ENCODE measurements at regions of chr2 and their contacts with region 1.

Region 1: DNA sequence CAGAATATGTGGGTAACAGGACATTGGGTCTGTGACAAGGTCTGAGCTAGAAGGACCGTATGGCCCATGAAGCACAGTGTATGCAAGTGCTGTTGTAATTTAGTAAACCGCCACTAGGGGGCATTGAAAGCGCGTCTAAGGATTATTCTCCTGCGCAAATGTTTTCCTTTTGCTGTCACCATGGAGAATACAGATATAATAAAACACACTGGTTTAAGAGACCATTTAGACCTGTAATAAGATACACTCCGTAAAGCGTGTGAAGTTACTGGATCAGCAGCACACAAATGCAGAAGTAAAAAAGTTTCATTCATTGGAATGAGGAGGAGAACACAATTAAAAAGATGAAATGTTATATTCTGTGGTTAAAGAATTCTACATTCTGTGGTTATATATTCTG is 272.4 kb downstream of the AGAP1 start:
- DNase-seq: peak; percentile 65 to 81
- ATAC-seq: peak; percentile 93 to 97
- H3K4me3 ChIP-seq: no peak overlapping the region
- H3K27ac ChIP-seq: no peak overlapping the region
- H3K4me1 ChIP-seq: peaks cover 9% of the 10 kb centered on the region; the same call in 1 of the 3 replicates
- CTCF ChIP-seq: peak; percentile 89
- EP300 ChIP-seq: no peak
- POLR2A ChIP-seq: no peak
- RAD21 ChIP-seq: peak; percentile 61 to 69

Region 2: DNA sequence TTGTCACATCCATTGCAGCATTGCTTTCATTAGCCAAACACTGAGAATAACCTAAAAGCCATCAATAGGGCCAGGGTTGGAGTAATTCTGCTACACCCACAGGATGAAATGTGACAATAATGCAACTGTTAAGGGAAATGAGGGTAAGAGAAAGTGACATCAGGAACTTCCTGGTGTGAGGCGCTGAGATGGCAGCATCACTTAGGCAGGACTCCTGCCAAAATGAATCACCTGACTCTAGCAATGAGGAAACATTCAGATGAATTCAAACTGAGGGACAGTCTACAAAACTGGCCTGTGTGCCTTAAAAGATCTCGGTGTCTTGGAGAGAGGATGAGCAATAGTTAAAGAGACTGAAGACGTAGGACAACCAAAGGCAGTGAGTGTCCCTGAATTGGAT is 388.0 kb before region 1 on chr2:
- CTCF ChIA-PET with region 1: no interaction called
- POLR2A ChIA-PET with region 1: no interaction called
- DNase-seq: peak in 1 of 2 experiments; percentile 56
- ATAC-seq: peak; percentile 52 to 83
- H3K4me3 ChIP-seq: no peak overlapping the region
- H3K27ac ChIP-seq: peak overlapping the region; percentile 47 to 68; a peak in 5 of 6 replicates
- H3K4me1 ChIP-seq: peaks cover 26% of the 10 kb centered on the region
- CTCF ChIP-seq: no peak
- EP300 ChIP-seq: no peak
- POLR2A ChIP-seq: no peak
- RAD21 ChIP-seq: no peak

Region 3: GRCh38 chr2:235634435-235635158 is 131.7 kb before region 1 on chr2:
- CTCF ChIA-PET with region 1: no interaction called
- POLR2A ChIA-PET with region 1: no interaction called
- DNase-seq: no peak
- ATAC-seq: no peak
- H3K4me3 ChIP-seq: no peak overlapping the region
- H3K27ac ChIP-seq: no peak overlapping the region
- H3K4me1 ChIP-seq: no peaks in the 10 kb centered on the region; the same call in 2 of the 3 replicates
- CTCF ChIP-seq: no peak
- EP300 ChIP-seq: no peak
- POLR2A ChIP-seq: no peak
- RAD21 ChIP-seq: no peak

Region 4: DNA sequence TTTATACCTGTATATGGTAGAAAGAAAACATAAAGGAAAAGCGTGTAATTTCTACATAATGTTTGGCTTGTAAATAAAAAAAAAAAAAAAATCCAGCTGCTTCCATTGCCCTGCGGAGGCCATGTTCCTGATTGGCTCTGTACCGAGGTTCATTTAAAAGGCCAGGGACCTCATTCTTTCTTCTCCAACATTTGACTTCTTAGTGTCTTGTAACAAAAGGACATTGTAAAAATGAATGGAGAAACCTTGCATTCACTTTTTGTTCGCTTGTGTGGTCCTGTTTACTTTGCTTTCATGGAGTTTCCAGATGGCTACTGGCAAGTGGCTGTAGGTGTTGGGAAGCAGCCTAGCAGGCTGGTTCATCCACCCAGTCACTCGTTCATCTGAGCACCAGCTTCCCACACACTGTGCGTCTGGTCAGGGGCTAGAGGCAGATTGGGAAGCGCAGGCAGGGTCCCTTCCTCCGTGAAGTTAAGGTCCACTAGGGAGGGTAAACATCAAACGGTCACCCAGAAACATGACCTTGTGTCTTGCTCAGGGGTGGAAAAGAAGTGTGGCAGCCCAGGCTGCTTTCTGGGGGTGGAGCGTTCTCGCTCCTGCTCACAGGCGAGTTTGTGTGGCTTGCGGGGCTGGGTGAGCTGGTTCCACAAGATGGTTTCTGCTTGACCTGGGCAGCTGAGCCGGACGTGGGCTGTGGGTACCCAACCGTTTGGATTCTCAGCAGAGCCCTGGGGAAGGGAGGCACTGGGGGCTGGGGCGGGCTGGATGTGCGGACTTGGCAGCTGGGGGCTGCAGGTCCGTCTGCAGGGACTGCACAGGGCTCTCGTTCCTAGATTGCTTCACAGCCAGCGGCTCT is 11.7 kb before region 1 on chr2:
- CTCF ChIA-PET with region 1: interaction called, 15 read pairs
- POLR2A ChIA-PET with region 1: no interaction called
- DNase-seq: no peak
- ATAC-seq: no peak
- H3K4me3 ChIP-seq: no peak overlapping the region
- H3K27ac ChIP-seq: no peak overlapping the region
- H3K4me1 ChIP-seq: no peaks in the 10 kb centered on the region
- CTCF ChIP-seq: no peak
- EP300 ChIP-seq: no peak
- POLR2A ChIP-seq: no peak
- RAD21 ChIP-seq: no peak

Region 5: GRCh38 chr2:235928751-235929370 is 162.6 kb after region 1 on chr2:
- CTCF ChIA-PET with region 1: no interaction called
- POLR2A ChIA-PET with region 1: no interaction called
- DNase-seq: no peak
- ATAC-seq: no peak
- H3K4me3 ChIP-seq: no peak overlapping the region
- H3K27ac ChIP-seq: no peak overlapping the region
- H3K4me1 ChIP-seq: no peaks in the 10 kb centered on the region
- CTCF ChIP-seq: no peak
- EP300 ChIP-seq: no peak
- POLR2A ChIP-seq: no peak
- RAD21 ChIP-seq: no peak

Region 6: GRCh38 chr2:236193051-236193450 is 426.8 kb after region 1 on chr2:
- CTCF ChIA-PET with region 1: interaction called, 13 read pairs
- POLR2A ChIA-PET with region 1: no interaction called
- DNase-seq: no peak
- ATAC-seq: peak in 1 of 2 experiments; percentile 35; a peak in 1 of 6 replicates
- H3K4me3 ChIP-seq: no peak overlapping the region
- H3K27ac ChIP-seq: no peak overlapping the region
- H3K4me1 ChIP-seq: no peaks in the 10 kb centered on the region
- CTCF ChIP-seq: no peak
- EP300 ChIP-seq: no peak
- POLR2A ChIP-seq: no peak
- RAD21 ChIP-seq: no peak

Measured in A549 (cell line).